HCT116 (cell line): ENCODE measurements at regions of chr2 and their contacts with region 1.

Region 1: DNA sequence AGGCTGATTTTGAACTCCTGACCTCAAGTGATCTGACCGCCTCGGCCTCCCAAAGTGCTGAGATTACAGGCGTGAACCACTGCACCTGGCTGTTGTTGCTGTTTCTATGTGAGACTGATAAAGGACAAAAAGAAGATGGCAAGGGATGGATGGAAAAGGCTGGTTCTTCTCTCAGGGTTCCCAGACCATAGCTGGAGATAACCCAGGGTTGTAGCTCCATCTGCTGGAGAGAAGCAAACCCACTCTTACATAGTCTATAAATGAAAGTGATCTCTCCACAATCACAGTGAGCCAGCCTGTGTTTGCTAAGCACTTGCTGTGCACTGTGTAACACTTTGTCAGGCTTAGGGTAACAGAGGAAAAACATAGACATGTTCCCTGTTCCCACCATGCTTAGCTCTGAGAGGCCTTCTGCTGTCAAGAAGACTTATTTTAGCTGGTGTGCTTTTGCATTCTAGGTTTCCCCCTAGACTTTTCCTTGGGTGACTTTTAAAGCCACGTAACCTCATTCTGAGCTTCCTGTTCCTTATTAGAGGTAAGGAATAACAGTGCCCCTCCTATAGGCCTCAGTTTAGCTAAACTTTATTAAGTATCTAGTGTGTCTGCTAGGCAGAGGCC is 49.7 kb downstream of the LIMS1 start:
- DNase-seq: no peak
- ATAC-seq: peak; percentile 96
- H3K4me3 ChIP-seq: no peak overlapping the region
- H3K27ac ChIP-seq: no peak overlapping the region
- H3K4me1 ChIP-seq: peaks cover 0 to 16% of the 10 kb centered on the region in 2 experiments; a peak in 1 of 4 replicates
- H3K27me3 ChIP-seq: no peaks in the 10 kb centered on the region
- CTCF ChIP-seq: peak; percentile 70 to 79 (median 71); a peak in 5 of 6 replicates
- POLR2A ChIP-seq: no peak
- RAD21 ChIP-seq: peak; percentile 89

Region 2: GRCh38 chr2:107936433-107937359 is 647.3 kb before region 1 on chr2:
- CTCF ChIA-PET with region 1: no interaction called
- POLR2A ChIA-PET with region 1: no interaction called
- RAD21 ChIA-PET with region 1: no interaction called
- intact Hi-C with region 1: loop called (anchors 10 kb)
- DNase-seq: no peak
- ATAC-seq: no peak
- H3K4me3 ChIP-seq: no peak overlapping the region
- H3K27ac ChIP-seq: no peak overlapping the region
- H3K4me1 ChIP-seq: no peaks in the 10 kb centered on the region
- H3K27me3 ChIP-seq: no peaks in the 10 kb centered on the region
- CTCF ChIP-seq: peak; percentile 16 to 57 (median 26); a peak in 3 of 6 replicates
- POLR2A ChIP-seq: no peak
- RAD21 ChIP-seq: peak; percentile 45

Region 3: DNA sequence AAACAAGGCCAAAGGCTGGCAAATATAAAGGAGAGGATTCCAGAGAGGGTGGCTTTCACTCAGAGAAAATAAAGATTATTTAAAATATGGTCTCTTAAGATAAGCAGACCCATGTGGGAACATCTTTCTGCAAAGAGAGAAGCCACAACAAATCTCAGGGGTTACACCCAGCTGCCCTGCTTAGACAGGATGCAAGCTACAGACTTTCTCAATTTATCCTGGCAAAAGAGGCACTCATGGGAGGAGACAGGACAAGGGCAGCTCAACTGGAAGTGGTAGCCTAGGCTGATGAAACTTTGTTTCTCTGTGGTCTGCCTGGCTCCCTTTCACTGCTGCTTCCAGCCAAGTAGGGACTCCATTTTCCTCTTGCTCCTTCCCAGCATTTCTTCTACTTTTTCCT is 232.1 kb before region 1 on chr2:
- CTCF ChIA-PET with region 1: interaction called, 7 read pairs
- POLR2A ChIA-PET with region 1: no interaction called
- RAD21 ChIA-PET with region 1: no interaction called
- intact Hi-C with region 1: loop called (anchors 1 kb)
- DNase-seq: no peak
- ATAC-seq: no peak
- H3K4me3 ChIP-seq: no peak overlapping the region
- H3K27ac ChIP-seq: no peak overlapping the region
- H3K4me1 ChIP-seq: no peaks in the 10 kb centered on the region
- H3K27me3 ChIP-seq: peaks cover 9% of the 10 kb centered on the region; the same call in 1 of the 2 replicates
- CTCF ChIP-seq: no peak
- POLR2A ChIP-seq: no peak
- RAD21 ChIP-seq: no peak

Region 4: DNA sequence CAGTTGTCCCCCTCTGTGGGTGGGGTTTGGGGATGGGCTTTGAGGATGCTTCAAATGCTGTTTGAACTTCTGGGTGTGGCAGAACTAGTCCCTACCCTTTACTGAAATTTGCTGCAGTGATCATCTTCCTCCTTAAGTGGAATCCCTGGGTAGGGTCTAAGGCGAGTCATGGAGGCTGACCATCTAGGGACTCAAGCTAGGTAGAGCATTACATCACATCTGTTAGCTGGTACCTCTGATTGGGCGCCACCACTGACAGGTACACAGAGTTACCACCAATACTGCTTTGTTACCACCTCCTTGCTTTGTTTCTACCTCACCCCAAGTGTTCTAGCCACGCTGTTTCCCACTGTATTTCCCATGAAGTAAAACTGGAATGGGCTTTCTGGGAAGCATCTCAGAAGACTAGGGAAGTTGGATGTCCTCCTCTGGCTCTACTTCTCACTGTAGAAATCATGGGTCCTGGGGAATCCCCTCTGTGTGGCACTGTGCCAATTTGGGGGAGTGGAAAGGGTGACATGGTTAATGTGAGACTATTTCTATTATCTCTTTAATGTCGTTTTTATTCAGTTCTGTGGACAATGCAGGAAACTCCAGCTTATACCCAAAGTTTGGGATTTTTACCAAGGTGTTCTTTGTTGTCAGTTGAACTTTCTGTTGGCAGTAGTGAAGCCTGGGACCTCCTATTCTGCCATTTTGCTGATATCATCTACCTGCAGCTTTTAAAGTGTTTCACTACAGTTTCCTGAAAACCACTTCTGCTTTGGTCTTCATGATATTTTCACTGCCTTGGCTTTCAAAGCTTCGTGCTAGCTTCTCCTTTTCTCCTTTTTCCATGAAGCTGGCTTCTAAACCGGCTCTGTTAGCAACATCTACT is 220.7 kb before region 1 on chr2:
- CTCF ChIA-PET with region 1: no interaction called
- POLR2A ChIA-PET with region 1: no interaction called
- RAD21 ChIA-PET with region 1: no interaction called
- intact Hi-C with region 1: no loop called
- DNase-seq: no peak
- ATAC-seq: no peak
- H3K4me3 ChIP-seq: no peak overlapping the region
- H3K27ac ChIP-seq: no peak overlapping the region
- H3K4me1 ChIP-seq: peaks cover 0 to 18% of the 10 kb centered on the region in 2 experiments; a peak in 2 of 4 replicates
- H3K27me3 ChIP-seq: no peaks in the 10 kb centered on the region
- CTCF ChIP-seq: no peak
- POLR2A ChIP-seq: no peak
- RAD21 ChIP-seq: no peak

Region 5: DNA sequence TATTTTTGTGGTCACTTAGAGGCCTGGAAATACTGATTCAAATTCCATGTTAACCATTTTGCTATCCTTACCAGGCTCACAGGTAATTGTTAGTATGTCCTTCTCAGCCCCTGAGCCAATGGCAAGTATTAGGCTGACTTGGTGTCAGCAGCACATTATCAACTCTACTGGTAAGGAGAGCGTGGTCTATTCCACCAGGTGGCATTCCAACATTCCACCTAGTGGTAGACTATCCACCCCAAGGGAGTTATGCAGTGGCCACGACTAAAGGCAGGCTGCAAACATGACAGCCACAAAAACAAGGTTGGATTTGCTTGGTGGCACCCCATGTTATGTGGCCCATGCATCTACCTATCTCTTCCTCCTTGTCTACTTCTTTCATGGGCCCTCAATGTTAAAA is 166.8 kb before region 1 on chr2:
- CTCF ChIA-PET with region 1: no interaction called
- POLR2A ChIA-PET with region 1: no interaction called
- RAD21 ChIA-PET with region 1: no interaction called
- intact Hi-C with region 1: loop called (anchors 2 kb)
- DNase-seq: peak; percentile 41
- ATAC-seq: peak; percentile 98
- H3K4me3 ChIP-seq: no peak overlapping the region
- H3K27ac ChIP-seq: no peak overlapping the region
- H3K4me1 ChIP-seq: peaks cover 0 to 12% of the 10 kb centered on the region in 2 experiments; a peak in 3 of 4 replicates
- H3K27me3 ChIP-seq: no peaks in the 10 kb centered on the region
- CTCF ChIP-seq: peak; percentile 41 to 93 (median 50); a peak in 5 of 6 replicates
- POLR2A ChIP-seq: no peak
- RAD21 ChIP-seq: peak; percentile 69